ENCODE measurements at regions of chr10 and their contacts with region 1.

Region 1: GRCh38 chr10:24209946-24210491 is 1.1 kb downstream of the KIAA1217 start:
- DNase-seq: peak in 4 of 5 donors; percentile 17 to 44 (median 29)
- ATAC-seq: peak in 3 of 4 donors; percentile 10 to 36 (median 28)
- H3K4me3 ChIP-seq: peak overlapping the region; percentile 30 to 74 (median 63)
- H3K27ac ChIP-seq: peak overlapping the region in 11 of 12 donors; percentile 86 to 93 (median 88)
- H3K4me1 ChIP-seq: peaks cover 4 to 77% (median 54%) of the 10 kb centered on the region in 12 donors
- H3K27me3 ChIP-seq: no peaks in the 10 kb centered on the region
- CTCF ChIP-seq: no peak
- POLR2A ChIP-seq: no peak

Region 2: DNA sequence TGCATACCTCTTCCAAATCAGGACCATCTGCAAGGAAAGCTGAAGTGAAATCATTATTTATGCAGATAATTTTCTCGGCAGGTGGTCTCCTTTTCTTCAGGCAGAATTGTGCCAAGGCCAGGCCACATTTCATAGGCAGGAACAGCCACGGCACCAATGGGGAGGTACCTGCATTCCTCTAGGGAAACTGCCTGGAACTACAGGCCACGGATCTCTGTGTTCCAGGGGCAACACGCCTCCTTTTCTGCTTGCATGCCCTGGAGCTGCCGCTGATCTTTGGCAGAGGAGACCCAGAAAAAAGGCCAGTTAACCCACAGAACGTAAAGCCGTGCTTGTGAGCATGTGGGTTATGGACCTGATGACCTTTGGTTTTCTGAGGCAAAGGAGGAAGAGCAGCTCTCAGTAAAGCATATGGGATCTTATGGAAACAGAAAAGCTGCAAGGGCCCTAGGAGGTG is 112.2 kb before region 1 on chr10:
- intact Hi-C with region 1: no loop called
- DNase-seq: no peak
- ATAC-seq: no peak
- H3K4me3 ChIP-seq: no peak overlapping the region
- H3K27ac ChIP-seq: no peak overlapping the region
- H3K4me1 ChIP-seq: peaks cover 0 to 9% (median 0%) of the 10 kb centered on the region in 12 donors
- H3K27me3 ChIP-seq: no peaks in the 10 kb centered on the region
- CTCF ChIP-seq: no peak
- POLR2A ChIP-seq: no peak

Region 3: DNA sequence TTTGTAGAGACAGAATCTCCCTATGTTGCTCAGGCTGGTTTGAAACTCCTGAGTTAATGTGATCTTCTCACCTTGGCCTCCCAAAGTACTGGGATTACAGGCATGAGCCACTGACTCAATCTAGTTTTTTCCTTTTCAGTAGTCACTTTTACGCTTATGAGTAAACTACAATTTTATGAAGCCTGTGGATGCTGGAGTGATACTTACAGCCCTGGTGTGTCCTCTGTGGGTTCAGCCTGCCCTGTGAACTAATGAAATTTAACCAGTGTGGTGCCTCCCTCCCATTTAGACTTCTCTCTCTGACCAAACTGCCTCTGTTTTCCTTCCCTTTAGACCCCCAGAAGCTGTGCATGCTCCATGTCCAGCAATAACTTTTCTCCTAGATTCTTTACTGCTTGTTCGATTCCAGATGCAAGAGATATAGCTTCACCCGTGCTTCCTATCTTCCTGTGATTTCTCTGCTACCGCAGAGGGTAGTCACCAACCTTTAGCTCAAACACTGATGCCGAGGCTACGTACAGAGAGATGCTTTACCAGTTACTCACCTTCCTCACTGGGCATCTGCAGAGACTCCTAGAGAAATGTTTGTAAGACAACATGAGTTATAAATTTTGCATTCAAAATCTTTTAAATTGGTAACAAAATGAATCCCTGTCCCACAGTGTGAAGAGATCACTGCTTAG is 89.7 kb after region 1 on chr10:
- intact Hi-C with region 1: loop called in 1 of 10 experiments (anchors 10 kb)
- DNase-seq: no peak
- ATAC-seq: no peak
- H3K4me3 ChIP-seq: no peak overlapping the region
- H3K27ac ChIP-seq: no peak overlapping the region
- H3K4me1 ChIP-seq: peaks cover 0 to 27% (median 2%) of the 10 kb centered on the region in 12 donors
- H3K27me3 ChIP-seq: no peaks in the 10 kb centered on the region
- CTCF ChIP-seq: no peak
- POLR2A ChIP-seq: no peak

Region 4: GRCh38 chr10:24344279-24344678 is 134.3 kb after region 1 on chr10:
- intact Hi-C with region 1: loop called in 2 of 10 experiments (anchors 5 to 10 kb)
- DNase-seq: no peak
- ATAC-seq: peak in 3 of 4 donors; percentile 13 to 41 (median 35)
- H3K4me3 ChIP-seq: peak overlapping the region in 1 of 12 donors; percentile 5
- H3K27ac ChIP-seq: peak overlapping the region in 6 of 12 donors; percentile 10 to 49 (median 43)
- H3K4me1 ChIP-seq: peaks cover 4 to 51% (median 32%) of the 10 kb centered on the region in 12 donors
- H3K27me3 ChIP-seq: no peaks in the 10 kb centered on the region
- CTCF ChIP-seq: no peak
- POLR2A ChIP-seq: no peak

Region 5: DNA sequence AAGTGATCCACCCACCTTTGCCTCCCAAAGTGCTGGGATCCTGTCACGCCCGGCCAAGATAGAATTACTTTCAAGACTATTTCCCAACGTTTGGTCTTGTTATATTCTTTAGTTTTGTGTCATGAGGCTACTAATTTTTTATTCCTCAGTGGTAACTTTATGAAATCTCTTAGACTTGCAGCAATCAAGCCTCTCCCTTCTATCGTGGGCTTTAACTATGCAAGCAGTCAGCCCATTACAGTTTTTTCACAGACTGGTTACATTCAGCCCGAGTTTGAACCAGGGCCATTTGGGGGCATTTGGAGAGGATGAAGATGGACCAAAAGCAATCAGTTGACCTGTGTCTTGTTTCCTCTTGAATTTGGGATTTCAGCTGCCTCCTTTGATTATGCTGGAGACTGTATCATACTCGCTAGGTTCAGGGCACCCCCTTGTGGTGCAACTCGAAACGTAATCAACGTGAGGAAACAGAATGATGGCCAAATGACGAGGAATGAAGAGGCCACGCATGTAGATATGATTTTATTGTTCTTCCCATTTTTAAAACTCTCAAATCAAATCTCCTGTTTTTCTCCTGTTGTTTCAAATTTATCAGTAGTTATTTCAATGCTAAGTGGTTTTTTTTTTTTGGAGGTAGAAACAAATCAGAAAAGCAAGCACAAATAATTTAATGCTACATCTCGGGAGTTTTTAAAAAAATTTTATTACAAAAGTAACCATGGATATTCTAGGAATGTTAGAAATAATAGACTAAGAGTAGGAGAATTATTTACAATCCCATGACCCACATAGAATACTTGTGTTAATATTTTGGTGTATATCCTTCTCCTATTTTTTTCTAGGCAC is 150.5 kb after region 1 on chr10:
- intact Hi-C with region 1: loop called in 5 of 10 experiments (anchors 5 kb)
- DNase-seq: peak in 4 of 5 donors; percentile 67 to 75 (median 69)
- ATAC-seq: peak in 3 of 4 donors; percentile 60 to 83 (median 78)
- H3K4me3 ChIP-seq: no peak overlapping the region
- H3K27ac ChIP-seq: no peak overlapping the region
- H3K4me1 ChIP-seq: peaks cover 0 to 18% (median 3%) of the 10 kb centered on the region in 12 donors
- H3K27me3 ChIP-seq: no peaks in the 10 kb centered on the region
- CTCF ChIP-seq: peak; percentile 49 to 85 (median 75)
- POLR2A ChIP-seq: no peak